ENCODE measurements at regions of chr7 and their contacts with region 1.

Region 1: GRCh38 chr7:94087664-94088352 is 83.7 kb upstream of the BET1 start:
- DNase-seq: peak; percentile 83
- H3K4me3 ChIP-seq: no peak overlapping the region
- H3K27ac ChIP-seq: no peak overlapping the region
- H3K4me1 ChIP-seq: peaks cover 6% of the 10 kb centered on the region
- H3K27me3 ChIP-seq: peaks cover 5 to 8% of the 10 kb centered on the region in 2 experiments
- CTCF ChIP-seq: peak; percentile 66 to 85
- POLR2A ChIP-seq: no peak

Region 2: GRCh38 chr7:93245525-93246432 is 842.0 kb before region 1 on chr7:
- CTCF ChIA-PET with region 1: interaction called, 3 read pairs
- POLR2A ChIA-PET with region 1: no interaction called
- dilution Hi-C with region 1: no loop called
- intact Hi-C with region 1: loop called (anchors 1 kb)
- DNase-seq: peak; percentile 59
- H3K4me3 ChIP-seq: no peak overlapping the region
- H3K27ac ChIP-seq: no peak overlapping the region
- H3K4me1 ChIP-seq: no peaks in the 10 kb centered on the region
- H3K27me3 ChIP-seq: no peaks in the 10 kb centered on the region
- CTCF ChIP-seq: peak; percentile 19 to 31
- POLR2A ChIP-seq: no peak

Region 3: GRCh38 chr7:93799750-93800357 is 288.0 kb before region 1 on chr7:
- CTCF ChIA-PET with region 1: interaction called, 59 read pairs
- POLR2A ChIA-PET with region 1: no interaction called
- dilution Hi-C with region 1: no loop called
- intact Hi-C with region 1: loop called (anchors 1 kb)
- DNase-seq: peak; percentile 43
- H3K4me3 ChIP-seq: no peak overlapping the region
- H3K27ac ChIP-seq: no peak overlapping the region
- H3K4me1 ChIP-seq: no peaks in the 10 kb centered on the region
- H3K27me3 ChIP-seq: no peaks in the 10 kb centered on the region
- CTCF ChIP-seq: peak; percentile 32 to 45
- POLR2A ChIP-seq: no peak

Region 4: GRCh38 chr7:93902777-93903423 is 184.9 kb before region 1 on chr7:
- CTCF ChIA-PET with region 1: interaction called, 106 read pairs
- POLR2A ChIA-PET with region 1: no interaction called
- dilution Hi-C with region 1: no loop called
- intact Hi-C with region 1: loop called (anchors 1 kb)
- DNase-seq: peak; percentile 83
- H3K4me3 ChIP-seq: no peak overlapping the region
- H3K27ac ChIP-seq: no peak overlapping the region
- H3K4me1 ChIP-seq: peaks cover 7% of the 10 kb centered on the region
- H3K27me3 ChIP-seq: peaks cover 3 to 12% of the 10 kb centered on the region in 2 experiments
- CTCF ChIP-seq: peak; percentile 75
- POLR2A ChIP-seq: no peak

Region 5: DNA sequence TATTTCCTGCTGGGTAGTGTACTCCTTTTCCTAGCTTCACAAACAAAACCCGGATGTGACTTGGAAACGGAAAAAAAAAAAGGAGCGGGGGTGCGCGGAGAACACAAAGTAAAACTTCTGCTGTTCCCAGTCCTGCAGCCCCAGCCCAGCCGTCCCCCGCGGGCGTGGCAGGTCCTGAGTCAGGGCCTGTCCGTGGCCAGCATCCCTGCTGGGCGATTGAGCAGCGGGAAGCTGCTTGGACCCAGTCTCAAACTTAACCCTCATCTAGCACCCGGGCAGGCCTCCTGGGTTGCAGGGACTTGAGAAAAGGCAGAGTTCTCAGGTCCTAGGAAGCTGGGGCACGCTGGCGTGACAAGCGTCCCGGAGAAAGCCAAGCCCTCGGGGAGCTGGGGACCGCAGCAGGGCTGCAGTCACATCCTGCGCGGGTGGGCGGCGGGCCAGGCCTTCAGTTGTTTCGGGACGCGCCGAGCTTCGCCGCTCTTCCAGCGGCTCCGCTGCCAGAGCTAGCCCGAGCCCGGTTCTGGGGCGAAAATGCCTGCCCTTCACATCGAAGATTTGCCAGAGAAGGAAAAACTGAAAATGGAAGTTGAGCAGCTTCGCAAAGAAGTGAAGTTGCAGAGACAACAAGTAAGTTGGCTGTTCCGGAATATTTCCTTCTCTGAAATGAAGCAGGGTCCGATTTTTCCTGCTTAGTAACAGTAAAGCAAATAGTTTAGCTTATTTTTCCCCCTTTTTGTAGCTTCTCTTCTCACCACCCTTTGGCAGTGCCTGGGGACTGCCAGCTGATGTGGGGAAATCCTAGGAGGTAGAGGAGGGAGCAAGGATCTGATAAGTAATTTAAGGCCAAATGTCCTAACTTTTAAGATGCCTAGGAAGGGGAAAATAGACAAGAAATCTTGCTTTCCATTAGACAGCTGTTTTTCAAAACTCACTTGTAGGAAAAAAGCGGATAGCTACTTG is 165.9 kb before region 1 on chr7 and contains the start of gene GNG11:
- CTCF ChIA-PET with region 1: interaction called, 18 read pairs
- POLR2A ChIA-PET with region 1: interaction called, 3 read pairs
- dilution Hi-C with region 1: no loop called
- intact Hi-C with region 1: loop called (anchors 5 kb)
- DNase-seq: peak; percentile 90
- H3K4me3 ChIP-seq: peak within 1 kb of the TSS; percentile 95 to 100 (median 100)
- H3K27ac ChIP-seq: peak within 1 kb of the TSS; percentile 99
- H3K4me1 ChIP-seq: peaks cover 25% of the 10 kb centered on the region
- H3K27me3 ChIP-seq: no peaks in the 10 kb centered on the region
- CTCF ChIP-seq: no peak
- POLR2A ChIP-seq: peak; percentile 86
- total RNA-seq, gene GNG11: 208 and 215 TPM in 2 replicates

Region 6: DNA sequence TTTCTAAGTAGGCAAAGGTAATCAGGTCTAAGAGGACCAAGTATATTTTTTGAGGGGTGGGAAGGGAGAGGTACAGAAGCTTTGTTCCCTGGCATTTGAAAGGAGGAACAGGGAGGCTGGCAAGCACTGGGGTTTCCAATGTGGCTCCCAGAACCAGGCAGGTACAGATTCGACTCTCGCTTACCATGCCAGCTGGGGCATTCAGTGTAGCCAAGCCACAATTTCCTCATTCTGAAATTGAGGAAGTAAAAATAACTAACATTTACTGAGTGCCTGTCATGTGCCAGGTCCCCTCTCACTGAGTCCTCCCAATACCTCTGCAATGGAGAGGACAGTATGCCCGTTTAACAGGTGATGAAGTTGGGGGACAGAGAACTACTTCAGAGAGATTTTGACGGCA is 37.8 kb before region 1 on chr7:
- CTCF ChIA-PET with region 1: no interaction called
- POLR2A ChIA-PET with region 1: no interaction called
- dilution Hi-C with region 1: no loop called
- intact Hi-C with region 1: no loop called
- DNase-seq: no peak
- H3K4me3 ChIP-seq: no peak overlapping the region
- H3K27ac ChIP-seq: no peak overlapping the region
- H3K4me1 ChIP-seq: no peaks in the 10 kb centered on the region
- H3K27me3 ChIP-seq: peaks cover 49 to 83% of the 10 kb centered on the region in 2 experiments
- CTCF ChIP-seq: no peak
- POLR2A ChIP-seq: no peak

Region 7: DNA sequence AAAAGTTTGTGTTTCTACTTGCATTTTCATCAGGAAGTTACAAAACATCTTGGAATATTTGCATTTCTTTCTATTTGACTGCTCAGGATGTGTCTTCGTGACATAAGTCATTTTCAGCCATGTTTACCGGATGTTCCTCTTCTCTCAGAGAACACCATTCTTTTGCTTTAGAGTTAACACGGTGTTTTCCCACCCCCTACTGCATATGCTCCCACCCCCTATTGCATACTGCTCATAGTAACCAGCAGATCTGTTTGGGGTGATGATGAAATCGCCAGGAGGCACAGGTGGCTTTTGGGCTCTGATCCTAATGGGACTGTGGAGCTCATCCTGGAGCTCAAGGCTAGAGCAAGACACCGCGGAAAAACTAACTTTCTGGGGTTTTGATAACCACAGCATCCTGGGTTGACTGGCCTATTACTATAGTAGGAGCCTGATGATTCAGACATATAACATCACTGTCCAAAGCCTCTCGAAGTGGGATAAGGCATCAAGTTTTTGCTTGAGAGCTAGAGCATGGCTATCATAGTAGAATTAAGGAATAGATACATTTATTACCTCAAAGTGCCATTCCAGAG is 18.6 kb before region 1 on chr7:
- CTCF ChIA-PET with region 1: interaction called, 11 read pairs
- POLR2A ChIA-PET with region 1: interaction called, 10 read pairs
- dilution Hi-C with region 1: no loop called
- intact Hi-C with region 1: loop called (anchors 2 kb)
- DNase-seq: no peak
- H3K4me3 ChIP-seq: no peak overlapping the region
- H3K27ac ChIP-seq: no peak overlapping the region
- H3K4me1 ChIP-seq: peaks cover 20% of the 10 kb centered on the region
- H3K27me3 ChIP-seq: peaks cover 50 to 74% of the 10 kb centered on the region in 2 experiments
- CTCF ChIP-seq: no peak
- POLR2A ChIP-seq: no peak

Region 8: DNA sequence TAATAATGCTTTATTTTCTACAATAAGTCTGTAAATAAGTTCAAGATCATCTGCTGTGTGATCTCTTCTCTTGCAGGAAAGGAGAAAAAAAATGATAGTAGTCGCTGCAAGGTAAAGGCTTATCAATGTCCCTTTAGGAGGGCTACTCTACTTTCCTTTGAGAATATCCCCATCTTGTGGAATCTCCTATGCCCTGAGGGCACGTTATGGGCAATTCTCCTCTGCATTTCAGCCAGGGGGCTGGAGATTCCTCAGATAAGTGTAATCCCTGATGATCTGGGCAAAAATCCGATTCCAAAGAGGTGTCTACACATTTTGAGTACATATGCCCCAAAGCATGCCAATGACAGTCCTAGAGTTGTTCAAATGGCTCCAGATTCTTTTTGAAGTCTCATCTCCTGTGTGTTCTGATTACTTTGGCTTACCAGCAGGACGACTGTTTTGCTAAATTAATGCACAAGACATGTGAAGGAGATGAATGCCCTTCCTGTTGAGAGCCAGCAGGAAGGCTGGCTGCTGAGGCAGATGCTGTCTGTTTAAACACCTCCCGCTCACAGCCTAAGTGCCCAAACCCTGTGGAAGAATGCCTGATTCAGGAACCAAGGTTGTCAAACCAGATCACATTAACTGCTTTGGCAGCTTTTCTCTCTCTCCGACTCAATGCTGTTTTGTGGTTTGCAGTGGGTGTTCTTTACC is 135.7 kb after region 1 on chr7:
- CTCF ChIA-PET with region 1: interaction called, 14 read pairs
- POLR2A ChIA-PET with region 1: no interaction called
- dilution Hi-C with region 1: no loop called
- intact Hi-C with region 1: loop called (anchors 1 kb)
- DNase-seq: peak; percentile 77
- H3K4me3 ChIP-seq: no peak overlapping the region
- H3K27ac ChIP-seq: no peak overlapping the region
- H3K4me1 ChIP-seq: peaks cover 8% of the 10 kb centered on the region
- H3K27me3 ChIP-seq: no peaks in the 10 kb centered on the region
- CTCF ChIP-seq: peak; percentile 55 to 67
- POLR2A ChIP-seq: no peak

Measured in endothelial cell of umbilical vein (primary cell).